HCT116 (cell line): ENCODE measurements at regions of chr12 and their contacts with region 1.

Region 1: DNA sequence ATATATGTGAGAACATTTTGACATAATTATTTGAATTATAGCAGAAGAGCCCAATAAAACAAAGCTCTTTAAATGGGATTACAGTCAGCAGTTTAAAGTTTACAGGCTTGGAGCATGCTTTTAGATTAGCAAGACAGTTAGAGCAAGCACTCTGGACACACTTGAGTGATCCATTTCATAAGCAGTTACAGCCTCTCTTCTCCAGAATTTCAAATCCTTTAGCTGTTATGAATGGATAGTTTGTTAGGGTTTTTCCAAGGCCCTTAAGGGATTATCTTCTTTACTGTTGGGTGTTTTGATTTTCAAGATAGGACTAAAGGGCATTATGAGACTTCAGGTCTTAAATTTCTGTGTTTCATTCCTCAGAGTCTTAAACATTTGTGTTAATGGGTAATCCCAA is 36.3 kb downstream of the BEST3 start:
- DNase-seq: no peak
- ATAC-seq: no peak
- H3K4me3 ChIP-seq: no peak overlapping the region
- H3K27ac ChIP-seq: no peak overlapping the region
- H3K4me1 ChIP-seq: no peaks in the 10 kb centered on the region
- H3K27me3 ChIP-seq: no peaks in the 10 kb centered on the region
- CTCF ChIP-seq: no peak
- POLR2A ChIP-seq: no peak
- RAD21 ChIP-seq: no peak

Region 2: DNA sequence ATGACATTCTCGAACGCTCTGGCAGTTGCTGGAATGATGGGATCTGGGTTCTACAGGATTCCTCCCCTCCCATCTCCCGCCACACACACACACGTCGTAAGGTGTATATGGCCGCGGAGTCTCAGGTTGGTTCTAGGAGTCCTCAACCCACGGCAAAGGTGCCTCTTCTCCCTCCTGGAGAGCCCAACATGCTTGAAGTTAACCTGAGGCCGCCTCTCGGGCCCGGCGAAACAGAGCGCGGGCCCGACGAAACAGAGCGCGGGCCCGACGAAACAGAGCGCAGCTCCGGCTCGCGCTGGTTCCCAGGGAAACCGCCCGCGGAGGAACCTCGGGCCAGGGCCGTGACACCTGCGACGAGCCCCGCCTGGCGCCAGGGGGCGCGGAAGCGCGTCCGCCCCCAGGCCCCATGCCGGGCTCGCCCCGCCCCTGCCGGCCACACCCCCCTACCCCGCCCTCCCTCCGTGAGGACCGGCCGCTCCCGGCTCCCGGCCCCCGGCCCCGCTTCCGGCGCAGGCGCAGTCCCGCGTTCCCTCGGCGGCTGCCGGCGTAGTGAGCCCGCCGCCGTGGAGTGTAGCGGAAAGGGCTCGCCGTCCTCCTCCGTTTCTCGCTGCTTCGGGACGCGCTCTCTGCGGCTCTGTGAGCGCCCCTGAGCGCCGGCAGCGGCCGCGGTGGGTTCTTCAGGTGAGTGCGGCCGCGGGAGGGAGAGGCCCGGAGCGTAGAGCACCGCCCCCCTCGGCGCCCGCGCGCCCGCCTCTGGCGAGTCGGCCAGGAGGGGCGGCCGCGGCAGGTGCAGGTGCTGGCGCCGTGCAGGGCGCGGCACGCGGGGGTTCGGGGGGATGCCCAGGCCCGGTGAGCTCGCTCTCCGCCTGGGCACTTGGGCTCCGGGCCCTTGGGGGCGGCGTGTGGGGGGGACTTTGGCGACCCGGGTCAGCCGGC is 75.9 kb after region 1 on chr12 and contains the start of gene RAB3IP:
- CTCF ChIA-PET with region 1: no interaction called
- POLR2A ChIA-PET with region 1: no interaction called
- RAD21 ChIA-PET with region 1: no interaction called
- intact Hi-C with region 1: loop called (anchors 5 kb)
- DNase-seq: peak; percentile 73
- ATAC-seq: peak; percentile 89
- H3K4me3 ChIP-seq: peak within 1 kb of the TSS; percentile 69 to 81
- H3K27ac ChIP-seq: peak within 1 kb of the TSS; percentile 82
- H3K4me1 ChIP-seq: peaks cover 7 to 14% of the 10 kb centered on the region in 2 experiments; a peak in 3 of 4 replicates
- H3K27me3 ChIP-seq: no peaks in the 10 kb centered on the region
- CTCF ChIP-seq: peak in 2 of 3 experiments; percentile 39 to 64; a peak in 4 of 6 replicates
- POLR2A ChIP-seq: no peak
- RAD21 ChIP-seq: no peak
- total RNA-seq, gene RAB3IP: 31.3 TPM

Region 3: DNA sequence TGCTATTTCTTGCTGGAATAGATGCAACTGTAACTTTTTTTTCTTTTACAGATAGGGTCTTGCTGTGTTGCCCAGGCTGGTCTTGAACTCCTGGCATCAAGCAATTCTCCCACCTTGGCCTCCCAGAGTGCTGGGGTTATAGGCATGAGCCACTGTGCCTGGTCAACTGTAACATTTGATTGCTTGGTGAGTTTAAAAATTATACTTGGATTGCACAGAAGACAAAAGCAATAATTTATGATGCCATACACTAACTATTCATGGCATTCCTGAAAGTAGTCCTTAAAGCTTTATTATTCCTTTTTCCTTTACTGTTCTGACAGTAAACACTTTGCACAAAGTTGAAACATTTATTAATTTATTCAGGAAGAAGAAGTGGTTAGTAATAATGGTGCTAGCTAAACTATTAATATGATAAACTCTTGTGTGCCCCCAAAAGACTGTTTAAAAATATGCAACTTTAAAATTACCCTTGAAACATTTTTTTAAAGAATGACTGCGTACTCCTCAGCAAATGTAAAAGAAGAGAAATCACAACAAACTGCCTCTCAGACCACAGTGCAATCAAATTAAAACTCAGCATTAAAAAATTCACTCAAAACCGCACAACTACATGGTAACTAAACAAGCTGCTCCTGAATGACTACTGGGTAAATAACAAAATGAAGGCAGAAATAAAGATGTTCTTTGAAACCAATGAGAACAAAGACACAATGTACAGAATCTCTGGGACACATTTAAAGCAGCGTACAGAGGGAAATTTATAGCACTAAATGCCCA is 966.1 kb after region 1 on chr12:
- CTCF ChIA-PET with region 1: no interaction called
- POLR2A ChIA-PET with region 1: no interaction called
- RAD21 ChIA-PET with region 1: no interaction called
- intact Hi-C with region 1: no loop called
- DNase-seq: no peak
- ATAC-seq: no peak
- H3K4me3 ChIP-seq: no peak overlapping the region
- H3K27ac ChIP-seq: no peak overlapping the region
- H3K4me1 ChIP-seq: no peaks in the 10 kb centered on the region
- H3K27me3 ChIP-seq: no peaks in the 10 kb centered on the region
- CTCF ChIP-seq: no peak
- POLR2A ChIP-seq: no peak
- RAD21 ChIP-seq: no peak

Region 4: DNA sequence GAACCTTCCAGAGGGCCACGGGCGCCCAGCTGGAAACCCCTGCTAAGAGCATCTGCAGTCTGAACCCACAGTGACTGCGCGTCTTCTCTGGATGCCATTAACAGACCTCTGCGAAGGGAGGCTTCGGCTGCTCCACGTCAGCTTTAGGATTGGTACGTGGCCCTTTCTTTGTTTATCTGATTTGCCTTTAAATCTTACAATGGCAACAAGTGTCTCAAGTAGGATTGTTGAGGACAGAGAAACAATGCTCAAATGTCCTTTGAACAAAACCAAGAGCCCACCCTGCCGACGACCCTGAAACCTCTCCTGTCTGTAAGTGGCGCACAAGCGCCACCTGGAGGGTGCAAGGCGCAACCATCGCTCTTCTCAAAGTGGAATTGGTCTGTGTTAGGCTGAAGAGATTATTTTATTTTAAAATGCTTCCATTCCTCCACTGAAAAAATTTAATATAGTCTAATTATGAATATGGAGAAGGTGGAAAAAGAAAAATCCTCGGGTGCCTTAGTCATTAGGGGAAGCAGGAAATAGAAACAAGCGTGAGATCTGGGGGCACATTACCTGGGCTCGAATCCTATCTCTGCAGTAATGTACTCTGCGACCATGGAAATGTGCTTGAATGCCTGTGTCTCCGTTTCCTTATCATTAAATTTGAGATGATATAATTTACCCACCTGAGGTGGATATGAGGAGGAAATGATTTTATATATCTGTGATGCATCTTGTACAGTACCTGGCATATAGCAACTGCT is 1057.1 kb after region 1 on chr12:
- CTCF ChIA-PET with region 1: no interaction called
- POLR2A ChIA-PET with region 1: no interaction called
- RAD21 ChIA-PET with region 1: no interaction called
- intact Hi-C with region 1: loop called (anchors 10 kb)
- DNase-seq: no peak
- ATAC-seq: peak; percentile 84
- H3K4me3 ChIP-seq: no peak overlapping the region
- H3K27ac ChIP-seq: no peak overlapping the region
- H3K4me1 ChIP-seq: no peaks in the 10 kb centered on the region
- H3K27me3 ChIP-seq: no peaks in the 10 kb centered on the region
- CTCF ChIP-seq: peak; percentile 94 to 97 (median 96)
- POLR2A ChIP-seq: no peak
- RAD21 ChIP-seq: peak; percentile 94